OCI-LY7 (cell line): ENCODE measurements at regions of chr14 and their contacts with region 1.

Region 1: GRCh38 chr14:74140374-74140850 is 55.7 kb downstream of the LIN52 start:
- DNase-seq: peak; percentile 58
- H3K4me3 ChIP-seq: no peak overlapping the region
- H3K27ac ChIP-seq: no peak overlapping the region
- H3K4me1 ChIP-seq: peaks cover 9% of the 10 kb centered on the region
- CTCF ChIP-seq: no peak

Region 2: DNA sequence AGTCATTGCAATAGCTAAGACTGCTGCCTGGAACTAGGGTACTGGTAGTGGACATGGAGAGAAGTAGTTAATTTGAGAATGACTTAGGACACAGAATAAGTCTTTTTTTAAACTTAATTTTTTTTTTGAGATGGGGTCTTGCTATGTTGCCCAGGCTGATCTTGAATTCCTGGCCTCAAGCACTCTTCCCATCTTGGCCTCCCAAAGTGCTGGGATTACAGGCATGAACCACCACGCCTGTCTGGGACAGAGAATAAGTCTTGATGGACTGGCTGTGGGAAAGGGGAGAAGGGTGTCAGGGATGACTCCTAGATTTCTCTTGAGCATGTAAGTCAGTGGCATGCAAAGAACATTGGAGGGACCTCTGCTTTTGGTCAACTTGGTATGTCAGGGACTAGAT is 12.8 kb before region 1 on chr14:
- CTCF ChIA-PET with region 1: no interaction called
- POLR2A ChIA-PET with region 1: interaction called, 15 read pairs
- intact Hi-C with region 1: no loop called
- DNase-seq: no peak
- H3K4me3 ChIP-seq: no peak overlapping the region
- H3K27ac ChIP-seq: no peak overlapping the region
- H3K4me1 ChIP-seq: no peaks in the 10 kb centered on the region
- CTCF ChIP-seq: no peak